HepG2 (cell line): ENCODE measurements at regions of chr1 and their contacts with region 1.

Region 1: GRCh38 chr1:151839457-151840405 is at the start of gene C2CD4D:
- DNase-seq: peak; percentile 68
- ATAC-seq: peak; percentile 71
- H3K4me3 ChIP-seq: peak within 1 kb of the TSS; percentile 34 to 56 (median 42); a peak in 5 of 6 replicates
- H3K27ac ChIP-seq: no peak within 1 kb of the TSS
- H3K4me1 ChIP-seq: peaks cover 58% of the 10 kb centered on the region
- H3K27me3 ChIP-seq: peaks cover 0 to 5% of the 10 kb centered on the region in 2 experiments; a peak in 2 of 5 replicates
- CTCF ChIP-seq: 0 out of 2 replicates have a peak, but pooled peaks have one; percentile 12
- EP300 ChIP-seq: no peak
- POLR2A ChIP-seq: peak; percentile 55 to 57; a peak in 3 of 4 replicates
- RAD21 ChIP-seq: 0 out of 2 replicates have a peak, but pooled peaks have one; percentile 9
- total RNA-seq, gene C2CD4D: not detected in 2 replicates

Region 2: DNA sequence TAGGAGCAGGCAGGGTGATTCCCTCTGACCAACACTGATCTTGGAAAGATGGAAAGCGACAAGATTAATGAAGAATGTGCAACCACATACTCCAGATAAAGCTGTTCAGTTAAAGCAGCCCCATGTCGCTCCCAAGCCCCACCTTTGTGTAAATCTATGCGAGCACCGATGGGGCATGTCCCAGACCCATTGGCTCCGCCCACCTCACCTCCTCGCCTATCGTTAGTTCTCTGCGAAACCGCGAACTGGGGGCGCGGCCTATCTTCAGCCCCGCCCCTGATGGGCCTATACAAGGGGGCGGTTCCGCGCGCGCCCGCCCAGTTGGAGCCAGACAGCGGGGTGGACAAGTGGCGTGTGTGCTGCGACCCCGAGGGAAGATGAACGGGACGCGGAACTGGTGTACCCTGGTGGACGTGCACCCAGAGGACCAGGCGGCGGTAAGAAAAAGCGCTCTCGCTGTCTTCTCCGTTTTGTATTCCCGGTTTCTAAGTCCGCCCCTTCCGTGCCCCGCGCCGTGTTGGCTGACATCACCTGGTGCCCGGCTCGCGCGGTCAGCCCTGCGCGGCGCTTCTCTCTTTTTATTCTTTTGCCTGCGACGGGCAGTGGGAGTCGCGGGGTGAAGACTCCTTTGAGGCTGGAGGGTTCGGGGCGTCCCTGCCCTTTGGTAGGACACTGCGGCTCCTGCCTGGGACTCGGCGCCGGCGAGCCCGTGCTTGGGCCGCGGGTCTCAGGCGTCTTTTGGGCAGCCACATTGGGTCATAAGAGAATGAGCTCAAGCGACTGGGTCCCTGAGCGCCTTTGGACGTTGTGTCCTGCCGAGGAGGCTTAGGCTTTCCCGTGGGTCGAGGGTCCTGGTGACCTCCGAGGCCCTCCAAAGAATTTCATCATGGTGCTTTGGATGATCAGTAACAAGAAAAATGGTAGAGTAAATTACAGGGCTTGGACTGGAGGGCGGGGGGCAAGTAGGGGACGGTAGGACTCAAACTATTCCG is 299.4 kb before region 1 on chr1 and contains the start of gene TUFT1:
- CTCF ChIA-PET with region 1: interaction called, 4 read pairs
- POLR2A ChIA-PET with region 1: interaction called, 6 read pairs
- in situ Hi-C with region 1: no loop called
- intact Hi-C with region 1: loop called (anchors 10 kb)
- DNase-seq: peak; percentile 90
- ATAC-seq: peak; percentile 93
- H3K4me3 ChIP-seq: peak within 1 kb of the TSS; percentile 70 to 82 (median 73)
- H3K27ac ChIP-seq: peak within 1 kb of the TSS; percentile 70
- H3K4me1 ChIP-seq: peaks cover 31% of the 10 kb centered on the region
- H3K27me3 ChIP-seq: no peaks in the 10 kb centered on the region; a peak in 1 of 5 replicates
- CTCF ChIP-seq: 0 out of 2 replicates have a peak, but pooled peaks have one; percentile 8
- EP300 ChIP-seq: no peak
- POLR2A ChIP-seq: peak; percentile 98 to 100
- RAD21 ChIP-seq: peak; percentile 47; the same call in 1 of the 2 replicates
- total RNA-seq, gene TUFT1: 7.3 and 7.7 TPM in 2 replicates

Region 3: DNA sequence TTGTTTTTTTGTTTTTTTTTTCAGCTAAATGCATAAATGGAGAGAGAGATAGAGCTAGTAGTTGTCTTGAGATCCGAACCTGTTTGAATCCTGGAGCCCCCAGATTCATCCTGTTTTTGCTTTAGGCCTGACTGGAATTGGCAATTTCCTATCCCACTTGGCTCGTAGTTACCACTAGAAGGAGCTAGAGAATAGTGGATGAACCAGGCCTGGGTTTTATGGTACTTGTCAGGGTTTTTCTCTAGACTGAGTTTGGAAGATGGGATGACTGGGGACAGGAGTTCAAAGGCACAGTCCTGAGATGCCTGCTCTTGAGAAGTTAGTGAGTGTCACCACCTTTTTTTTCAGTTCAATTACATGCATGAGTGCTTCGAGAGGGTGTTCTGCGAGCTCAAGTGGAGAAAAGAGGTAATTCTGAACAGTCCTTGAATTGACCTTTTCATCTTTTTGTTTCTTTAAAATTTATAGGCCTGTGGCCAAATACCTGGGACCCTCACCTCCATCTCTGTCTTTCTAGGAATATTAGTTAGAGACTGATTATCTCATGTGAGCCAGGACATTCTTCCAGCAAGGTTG is 146.6 kb before region 1 on chr1:
- CTCF ChIA-PET with region 1: interaction called, 13 read pairs
- POLR2A ChIA-PET with region 1: no interaction called
- in situ Hi-C with region 1: no loop called
- intact Hi-C with region 1: loop called (anchors 1 kb)
- DNase-seq: peak; percentile 36
- ATAC-seq: peak; percentile 62
- H3K4me3 ChIP-seq: no peak overlapping the region
- H3K27ac ChIP-seq: no peak overlapping the region
- H3K4me1 ChIP-seq: no peaks in the 10 kb centered on the region
- H3K27me3 ChIP-seq: no peaks in the 10 kb centered on the region
- CTCF ChIP-seq: peak; percentile 77
- EP300 ChIP-seq: no peak
- POLR2A ChIP-seq: no peak
- RAD21 ChIP-seq: peak; percentile 69

Region 4: GRCh38 chr1:151739590-151740375 is 99.9 kb before region 1 on chr1:
- CTCF ChIA-PET with region 1: interaction called, 6 read pairs
- POLR2A ChIA-PET with region 1: no interaction called
- in situ Hi-C with region 1: no loop called
- intact Hi-C with region 1: loop called (anchors 2 kb)
- DNase-seq: no peak
- ATAC-seq: no peak
- H3K4me3 ChIP-seq: no peak overlapping the region
- H3K27ac ChIP-seq: no peak overlapping the region
- H3K4me1 ChIP-seq: no peaks in the 10 kb centered on the region
- H3K27me3 ChIP-seq: peaks cover 0 to 11% of the 10 kb centered on the region in 2 experiments; a peak in 2 of 5 replicates
- CTCF ChIP-seq: no peak
- EP300 ChIP-seq: no peak
- POLR2A ChIP-seq: no peak
- RAD21 ChIP-seq: no peak

Region 5: DNA sequence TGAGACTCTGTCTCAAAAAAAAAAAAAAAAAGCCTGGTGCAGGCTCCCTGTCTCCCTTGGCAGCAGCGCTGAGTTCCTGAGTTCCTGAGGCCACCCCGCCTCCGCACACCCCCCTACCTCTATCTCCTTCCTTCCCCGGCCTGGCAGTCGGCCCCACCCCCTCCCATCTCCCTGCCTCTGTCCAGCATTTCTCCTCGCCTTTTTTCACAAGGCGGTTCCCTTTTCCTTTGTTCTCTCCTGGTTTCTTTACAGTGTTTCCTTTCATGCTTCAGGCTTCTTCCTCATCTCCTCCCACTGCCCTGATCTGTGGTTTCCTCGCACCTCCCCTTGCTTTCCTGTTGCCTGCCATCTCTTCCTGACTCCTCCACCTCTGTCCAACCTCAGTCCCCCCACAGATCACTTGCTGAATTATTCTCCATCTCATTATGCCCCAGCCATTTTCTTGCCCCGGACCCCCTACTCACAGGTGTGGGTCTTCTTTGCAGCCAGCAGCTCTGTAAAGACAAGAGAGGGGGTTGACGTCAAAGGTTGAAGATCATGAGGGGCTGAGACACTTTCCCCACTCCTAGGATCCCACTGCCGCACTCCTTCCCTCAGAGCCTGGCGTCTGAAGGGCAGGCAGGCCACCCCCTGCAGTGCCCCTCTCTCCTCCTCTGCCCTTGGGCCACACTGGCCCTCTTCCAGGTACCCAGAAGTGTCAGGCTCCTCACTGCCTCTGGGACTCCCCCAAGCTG is 10.6 kb before region 1 on chr1:
- CTCF ChIA-PET with region 1: no interaction called
- POLR2A ChIA-PET with region 1: interaction called, 10 read pairs
- in situ Hi-C with region 1: no loop called
- intact Hi-C with region 1: no loop called
- DNase-seq: no peak
- ATAC-seq: no peak
- H3K4me3 ChIP-seq: no peak overlapping the region
- H3K27ac ChIP-seq: no peak overlapping the region
- H3K4me1 ChIP-seq: peaks cover 42% of the 10 kb centered on the region
- H3K27me3 ChIP-seq: no peaks in the 10 kb centered on the region; a peak in 2 of 5 replicates
- CTCF ChIP-seq: no peak
- EP300 ChIP-seq: no peak
- POLR2A ChIP-seq: no peak
- RAD21 ChIP-seq: no peak